Mammary epithelial cell (primary cell): ENCODE measurements at regions of chrX and their contacts with region 1.

Region 1: DNA sequence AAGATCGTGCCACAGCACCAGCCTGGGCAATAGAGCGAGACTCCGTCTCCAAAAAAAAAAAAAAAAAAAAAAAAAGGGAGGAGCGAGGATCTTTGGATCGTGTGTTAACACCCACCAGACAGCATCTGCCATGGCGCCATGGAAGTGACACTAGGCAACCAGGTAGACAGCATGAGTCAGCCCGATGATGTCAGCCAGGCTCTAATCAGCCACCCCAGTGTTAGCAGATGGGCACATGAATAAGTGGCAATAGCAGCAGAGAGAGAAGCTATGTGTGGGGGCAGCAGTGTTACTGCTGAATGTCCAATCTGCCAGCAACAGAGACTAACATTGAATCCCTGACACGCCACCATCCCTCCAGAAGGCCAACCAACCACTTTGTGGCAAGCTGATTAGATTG is 6.6 kb downstream of the SYN1 start:
- DNase-seq: no peak
- H3K4me3 ChIP-seq: no peak overlapping the region
- H3K27ac ChIP-seq: no peak overlapping the region
- H3K4me1 ChIP-seq: no peaks in the 10 kb centered on the region
- H3K27me3 ChIP-seq: no peaks in the 10 kb centered on the region
- CTCF ChIP-seq: no peak

Region 2: DNA sequence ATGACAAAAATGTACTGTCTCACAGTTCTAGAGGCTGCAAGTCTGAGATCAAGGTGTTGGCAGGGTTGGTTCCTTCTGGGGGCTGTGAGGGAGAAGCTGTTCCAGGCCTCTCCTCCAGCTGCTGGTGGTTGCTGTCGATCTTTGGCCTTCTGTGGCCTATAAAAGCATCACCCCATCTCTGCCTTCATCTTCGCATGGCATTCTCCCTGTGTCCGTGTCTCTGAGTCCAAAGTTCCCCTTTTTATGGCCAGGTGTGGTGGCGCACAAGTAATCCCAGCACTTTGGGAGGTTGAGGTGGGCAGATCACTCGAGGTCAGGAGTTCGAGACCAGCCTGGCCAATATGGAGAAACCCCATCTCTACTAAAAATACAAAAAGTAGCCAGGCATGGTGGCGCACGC is 83.5 kb before region 1 on chrX:
- CTCF ChIA-PET with region 1: no interaction called
- dilution Hi-C with region 1: loop called (anchors 5 kb)
- in situ Hi-C with region 1: no loop called
- intact Hi-C with region 1: no loop called
- DNase-seq: no peak
- H3K4me3 ChIP-seq: no peak overlapping the region
- H3K27ac ChIP-seq: no peak overlapping the region
- H3K4me1 ChIP-seq: no peaks in the 10 kb centered on the region
- H3K27me3 ChIP-seq: no peaks in the 10 kb centered on the region
- CTCF ChIP-seq: no peak

Region 3: DNA sequence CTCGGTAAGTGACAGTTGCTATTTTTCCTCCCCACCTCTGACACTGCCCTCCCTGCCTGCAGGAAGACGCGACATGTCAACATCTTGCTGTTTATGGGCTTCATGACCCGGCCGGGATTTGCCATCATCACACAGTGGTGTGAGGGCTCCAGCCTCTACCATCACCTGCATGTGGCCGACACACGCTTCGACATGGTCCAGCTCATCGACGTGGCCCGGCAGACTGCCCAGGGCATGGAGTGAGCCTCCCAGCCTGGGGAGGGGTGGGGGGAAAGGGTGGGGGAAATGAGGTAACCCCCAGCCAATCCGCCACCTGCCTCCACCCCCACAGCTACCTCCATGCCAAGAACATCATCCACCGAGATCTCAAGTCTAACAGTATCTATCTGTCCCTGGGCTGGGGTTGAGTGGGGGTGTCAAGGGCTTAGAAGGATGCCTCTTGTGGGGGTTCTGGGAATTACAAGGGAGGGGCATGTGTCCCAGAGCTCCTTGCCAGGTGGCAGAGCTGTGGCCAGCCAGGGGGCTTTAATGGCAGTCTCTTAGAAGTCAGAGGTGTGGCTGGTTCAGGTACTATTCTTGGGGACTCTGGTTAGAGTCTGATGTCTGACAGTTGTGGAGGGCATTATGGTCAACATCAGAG is 44.3 kb before region 1 on chrX:
- CTCF ChIA-PET with region 1: no interaction called
- dilution Hi-C with region 1: loop called (anchors 5 kb)
- in situ Hi-C with region 1: no loop called
- intact Hi-C with region 1: no loop called
- DNase-seq: no peak
- H3K4me3 ChIP-seq: no peak overlapping the region
- H3K27ac ChIP-seq: no peak overlapping the region
- H3K4me1 ChIP-seq: peaks cover 9% of the 10 kb centered on the region
- H3K27me3 ChIP-seq: no peaks in the 10 kb centered on the region
- CTCF ChIP-seq: peak; percentile 27 to 40